ENCODE measurements at regions of chr15 and their contacts with region 1.

Region 1: GRCh38 chr15:45795440-45796069 is 160.7 kb downstream of the SQOR start:
- DNase-seq: peak; percentile 54 to 67
- H3K4me3 ChIP-seq: no peak overlapping the region
- H3K4me3 Mint-ChIP-seq: no peak overlapping the region
- H3K27ac Mint-ChIP-seq: no peak overlapping the region
- H3K4me1 ChIP-seq: peaks cover 16% of the 10 kb centered on the region
- H3K4me1 Mint-ChIP-seq: peaks cover 6% of the 10 kb centered on the region
- H3K27me3 ChIP-seq: no peaks in the 10 kb centered on the region
- H3K27me3 Mint-ChIP-seq: no peaks in the 10 kb centered on the region
- CTCF ChIP-seq: peak; percentile 53 to 56

Region 2: DNA sequence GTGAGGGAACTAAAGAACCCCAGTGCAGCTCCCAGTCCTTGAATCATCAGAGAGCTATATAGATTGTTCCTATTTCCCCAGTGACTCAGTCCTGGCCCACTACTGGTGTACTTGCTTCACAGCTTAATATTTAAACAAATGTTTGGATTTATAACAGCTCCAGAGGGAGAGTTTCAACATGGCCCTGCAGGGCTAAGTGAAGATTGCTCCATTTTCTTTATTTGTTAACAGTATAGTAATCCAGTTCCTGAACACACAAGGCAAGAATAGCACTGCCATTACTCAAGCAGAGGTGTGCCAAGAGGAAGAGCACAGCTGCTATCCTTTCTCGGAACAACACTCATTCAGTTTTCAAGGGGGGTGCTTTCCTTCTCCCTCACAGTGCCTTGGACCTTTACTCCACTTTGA is 154.2 kb before region 1 on chr15:
- CTCF ChIA-PET with region 1: no interaction called
- POLR2A ChIA-PET with region 1: no interaction called
- intact Hi-C with region 1: loop called (anchors 10 kb)
- DNase-seq: peak; percentile 64 to 71
- H3K4me3 ChIP-seq: no peak overlapping the region
- H3K4me3 Mint-ChIP-seq: no peak overlapping the region
- H3K27ac Mint-ChIP-seq: no peak overlapping the region
- H3K4me1 ChIP-seq: peaks cover 48% of the 10 kb centered on the region
- H3K4me1 Mint-ChIP-seq: peaks cover 43% of the 10 kb centered on the region
- H3K27me3 ChIP-seq: no peaks in the 10 kb centered on the region
- H3K27me3 Mint-ChIP-seq: no peaks in the 10 kb centered on the region
- CTCF ChIP-seq: no peak

Region 3: GRCh38 chr15:45705510-45706473 is 89.8 kb before region 1 on chr15:
- CTCF ChIA-PET with region 1: interaction called, 10 read pairs
- POLR2A ChIA-PET with region 1: no interaction called
- intact Hi-C with region 1: loop called (anchors 1 kb)
- DNase-seq: peak; percentile 71 to 76
- H3K4me3 ChIP-seq: peak overlapping the region; percentile 47
- H3K4me3 Mint-ChIP-seq: peak overlapping the region; percentile 93
- H3K27ac Mint-ChIP-seq: peak overlapping the region; percentile 59
- H3K4me1 ChIP-seq: 0 out of 2 replicates have a peak, but pooled peaks cover 3% of the 10 kb centered on the region
- H3K4me1 Mint-ChIP-seq: peaks cover 7% of the 10 kb centered on the region
- H3K27me3 ChIP-seq: no peaks in the 10 kb centered on the region
- H3K27me3 Mint-ChIP-seq: no peaks in the 10 kb centered on the region
- CTCF ChIP-seq: peak; percentile 66 to 82

Region 4: DNA sequence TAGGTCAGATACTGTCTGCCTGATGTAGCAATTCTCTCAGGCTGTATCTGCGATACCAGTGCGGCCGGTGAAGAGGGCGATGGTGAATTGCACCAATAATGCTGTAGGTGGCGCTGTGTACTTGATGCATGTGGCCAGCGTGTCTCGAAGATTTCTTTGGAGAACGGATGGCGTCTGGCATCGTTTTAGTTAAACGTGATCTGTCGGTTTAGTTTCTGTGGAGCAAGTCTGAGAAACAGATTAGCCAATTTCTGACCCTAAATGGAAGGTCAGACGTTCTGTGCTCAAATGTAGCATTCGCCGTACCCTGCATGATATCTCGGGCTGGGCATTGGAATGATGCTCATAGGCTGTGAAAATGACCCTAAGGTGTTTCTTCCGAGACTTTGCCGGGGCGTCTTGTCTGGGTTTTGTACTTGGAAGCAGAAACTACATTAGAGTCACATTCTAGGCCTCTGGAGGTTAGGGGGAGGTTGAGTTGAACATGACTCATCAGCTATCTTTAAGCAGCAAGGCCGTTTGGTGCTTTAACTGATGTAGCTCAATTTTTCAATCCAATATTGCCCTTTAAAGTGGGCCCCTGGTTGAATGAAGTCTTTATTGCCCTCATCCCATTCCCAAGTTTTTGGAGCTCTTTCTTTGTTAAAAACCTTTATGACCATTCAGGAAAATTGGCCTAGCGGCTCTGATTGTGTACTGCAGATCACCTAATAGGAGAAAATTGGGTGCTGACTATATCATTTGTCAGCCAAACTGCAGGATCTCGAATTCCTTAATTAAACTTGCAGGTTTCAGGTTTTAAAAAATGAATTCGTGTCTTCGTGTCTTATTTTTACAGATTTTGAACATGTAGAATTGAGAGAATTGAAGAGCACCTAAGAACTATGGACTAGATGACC is 80.7 kb before region 1 on chr15:
- CTCF ChIA-PET with region 1: interaction called, 7 read pairs
- POLR2A ChIA-PET with region 1: no interaction called
- intact Hi-C with region 1: loop called (anchors 1 kb)
- DNase-seq: peak; percentile 70 to 79
- H3K4me3 ChIP-seq: no peak overlapping the region
- H3K4me3 Mint-ChIP-seq: no peak overlapping the region
- H3K27ac Mint-ChIP-seq: no peak overlapping the region
- H3K4me1 ChIP-seq: no peaks in the 10 kb centered on the region
- H3K4me1 Mint-ChIP-seq: peaks cover 5% of the 10 kb centered on the region
- H3K27me3 ChIP-seq: no peaks in the 10 kb centered on the region
- H3K27me3 Mint-ChIP-seq: peaks cover 5% of the 10 kb centered on the region
- CTCF ChIP-seq: peak; percentile 81 to 87

Region 5: DNA sequence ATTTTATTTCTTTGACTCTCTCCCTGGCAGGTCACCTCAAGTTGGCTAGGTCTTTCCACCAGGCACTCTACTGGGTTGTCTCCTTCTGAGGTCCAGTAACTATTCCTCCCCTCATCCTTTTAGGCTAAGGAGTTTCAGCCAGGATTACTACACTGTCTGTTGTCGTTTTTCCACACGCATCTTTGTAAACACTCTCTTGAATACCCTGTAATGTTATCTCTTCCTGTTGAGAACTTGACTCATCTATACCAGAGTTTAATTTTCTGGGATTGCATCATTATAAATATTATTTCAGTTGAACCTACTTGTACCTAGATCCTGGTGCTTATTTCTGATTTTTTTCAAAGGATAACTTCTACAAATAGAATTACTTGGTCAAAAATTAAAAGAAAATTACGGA is 22.4 kb before region 1 on chr15:
- CTCF ChIA-PET with region 1: no interaction called
- POLR2A ChIA-PET with region 1: no interaction called
- intact Hi-C with region 1: no loop called
- DNase-seq: no peak
- H3K4me3 ChIP-seq: no peak overlapping the region
- H3K4me3 Mint-ChIP-seq: no peak overlapping the region
- H3K27ac Mint-ChIP-seq: no peak overlapping the region
- H3K4me1 ChIP-seq: no peaks in the 10 kb centered on the region
- H3K4me1 Mint-ChIP-seq: no peaks in the 10 kb centered on the region
- H3K27me3 ChIP-seq: no peaks in the 10 kb centered on the region
- H3K27me3 Mint-ChIP-seq: peaks cover 2% of the 10 kb centered on the region
- CTCF ChIP-seq: no peak

Region 6: GRCh38 chr15:45855907-45856579 is 60.5 kb after region 1 on chr15:
- CTCF ChIA-PET with region 1: interaction called, 5 read pairs
- POLR2A ChIA-PET with region 1: no interaction called
- intact Hi-C with region 1: loop called (anchors 5 kb)
- DNase-seq: no peak
- H3K4me3 ChIP-seq: no peak overlapping the region
- H3K4me3 Mint-ChIP-seq: no peak overlapping the region
- H3K27ac Mint-ChIP-seq: no peak overlapping the region
- H3K4me1 ChIP-seq: peaks cover 10% of the 10 kb centered on the region
- H3K4me1 Mint-ChIP-seq: peaks cover 19% of the 10 kb centered on the region
- H3K27me3 ChIP-seq: no peaks in the 10 kb centered on the region
- H3K27me3 Mint-ChIP-seq: no peaks in the 10 kb centered on the region
- CTCF ChIP-seq: no peak

Region 7: GRCh38 chr15:45943240-45943639 is 147.7 kb after region 1 on chr15:
- CTCF ChIA-PET with region 1: no interaction called
- POLR2A ChIA-PET with region 1: no interaction called
- intact Hi-C with region 1: no loop called
- DNase-seq: peak; percentile 38 to 70
- H3K4me3 ChIP-seq: no peak overlapping the region
- H3K4me3 Mint-ChIP-seq: no peak overlapping the region
- H3K27ac Mint-ChIP-seq: no peak overlapping the region
- H3K4me1 ChIP-seq: peaks cover 29% of the 10 kb centered on the region
- H3K4me1 Mint-ChIP-seq: peaks cover 9% of the 10 kb centered on the region
- H3K27me3 ChIP-seq: no peaks in the 10 kb centered on the region
- H3K27me3 Mint-ChIP-seq: no peaks in the 10 kb centered on the region
- CTCF ChIP-seq: no peak

Region 8: GRCh38 chr15:46080016-46080415 is 284.5 kb after region 1 on chr15:
- CTCF ChIA-PET with region 1: no interaction called
- POLR2A ChIA-PET with region 1: no interaction called
- intact Hi-C with region 1: loop called (anchors 2 kb)
- DNase-seq: no peak
- H3K4me3 ChIP-seq: no peak overlapping the region
- H3K4me3 Mint-ChIP-seq: no peak overlapping the region
- H3K27ac Mint-ChIP-seq: no peak overlapping the region
- H3K4me1 ChIP-seq: no peaks in the 10 kb centered on the region
- H3K4me1 Mint-ChIP-seq: no peaks in the 10 kb centered on the region
- H3K27me3 ChIP-seq: no peaks in the 10 kb centered on the region
- H3K27me3 Mint-ChIP-seq: peaks cover 5% of the 10 kb centered on the region
- CTCF ChIP-seq: no peak

Region 9: GRCh38 chr15:46280762-46281542 is 485.4 kb after region 1 on chr15:
- CTCF ChIA-PET with region 1: no interaction called
- POLR2A ChIA-PET with region 1: no interaction called
- intact Hi-C with region 1: loop called (anchors 5 kb)
- DNase-seq: peak; percentile 38 to 41
- H3K4me3 ChIP-seq: no peak overlapping the region
- H3K4me3 Mint-ChIP-seq: no peak overlapping the region
- H3K27ac Mint-ChIP-seq: no peak overlapping the region
- H3K4me1 ChIP-seq: no peaks in the 10 kb centered on the region
- H3K4me1 Mint-ChIP-seq: no peaks in the 10 kb centered on the region
- H3K27me3 ChIP-seq: no peaks in the 10 kb centered on the region
- H3K27me3 Mint-ChIP-seq: no peaks in the 10 kb centered on the region
- CTCF ChIP-seq: peak; percentile 35 to 41

Region 10: GRCh38 chr15:46354443-46354842 is 558.9 kb after region 1 on chr15:
- CTCF ChIA-PET with region 1: no interaction called
- POLR2A ChIA-PET with region 1: no interaction called
- intact Hi-C with region 1: no loop called
- DNase-seq: no peak
- H3K4me3 ChIP-seq: no peak overlapping the region
- H3K4me3 Mint-ChIP-seq: no peak overlapping the region
- H3K27ac Mint-ChIP-seq: no peak overlapping the region
- H3K4me1 ChIP-seq: no peaks in the 10 kb centered on the region
- H3K4me1 Mint-ChIP-seq: no peaks in the 10 kb centered on the region
- H3K27me3 ChIP-seq: no peaks in the 10 kb centered on the region
- H3K27me3 Mint-ChIP-seq: no peaks in the 10 kb centered on the region
- CTCF ChIP-seq: no peak